Activated B cell treated with CpG ODN at 0.5 μM for 24 hours (primary cell): ENCODE measurements at regions of chr4 and their contacts with region 1.

Region 1: GRCh38 chr4:185437809-185438208 is 12.0 kb upstream of the UFSP2 start:
- DNase-seq: no peak
- ATAC-seq: no peak
- H3K4me3 Mint-ChIP-seq: no peak overlapping the region
- H3K27ac Mint-ChIP-seq: no peak overlapping the region
- H3K4me1 Mint-ChIP-seq: no peaks in the 10 kb centered on the region
- H3K27me3 Mint-ChIP-seq: peaks cover 1% of the 10 kb centered on the region
- CTCF ChIP-seq: no peak

Region 2: GRCh38 chr4:184994010-184994622 is 443.7 kb before region 1 on chr4:
- CTCF ChIA-PET with region 1: no interaction called
- POLR2A ChIA-PET with region 1: no interaction called
- intact Hi-C with region 1: no loop called
- DNase-seq: no peak
- ATAC-seq: no peak
- H3K4me3 Mint-ChIP-seq: no peak overlapping the region
- H3K27ac Mint-ChIP-seq: no peak overlapping the region
- H3K4me1 Mint-ChIP-seq: no peaks in the 10 kb centered on the region
- H3K27me3 Mint-ChIP-seq: no peaks in the 10 kb centered on the region
- CTCF ChIP-seq: no peak

Region 3: DNA sequence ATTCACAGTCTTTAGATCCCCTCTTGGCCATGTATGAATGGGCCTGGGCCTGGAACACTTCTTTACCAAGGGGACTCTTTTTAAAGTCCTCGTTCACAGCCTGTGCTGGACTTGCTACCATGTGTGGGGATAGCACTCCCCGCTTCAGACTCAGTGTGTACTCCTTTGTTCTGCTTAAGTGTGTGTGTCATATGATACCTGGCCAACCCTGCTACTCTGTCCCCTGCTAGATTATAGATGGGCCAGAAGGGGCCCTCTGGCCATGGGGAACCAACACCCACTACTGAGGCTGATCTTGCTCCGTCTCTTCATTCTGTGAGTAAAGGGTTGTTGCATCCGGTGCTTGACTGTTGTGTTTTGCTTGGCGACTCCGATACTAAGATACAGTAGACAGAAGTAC is 25.7 kb after region 1 on chr4:
- CTCF ChIA-PET with region 1: no interaction called
- POLR2A ChIA-PET with region 1: no interaction called
- intact Hi-C with region 1: loop called (anchors 1 kb)
- DNase-seq: no peak
- ATAC-seq: no peak
- H3K4me3 Mint-ChIP-seq: no peak overlapping the region
- H3K27ac Mint-ChIP-seq: no peak overlapping the region
- H3K4me1 Mint-ChIP-seq: no peaks in the 10 kb centered on the region
- H3K27me3 Mint-ChIP-seq: peaks cover 20% of the 10 kb centered on the region
- CTCF ChIP-seq: no peak